ENCODE measurements at regions of chr14 and their contacts with region 1.

Region 1: DNA sequence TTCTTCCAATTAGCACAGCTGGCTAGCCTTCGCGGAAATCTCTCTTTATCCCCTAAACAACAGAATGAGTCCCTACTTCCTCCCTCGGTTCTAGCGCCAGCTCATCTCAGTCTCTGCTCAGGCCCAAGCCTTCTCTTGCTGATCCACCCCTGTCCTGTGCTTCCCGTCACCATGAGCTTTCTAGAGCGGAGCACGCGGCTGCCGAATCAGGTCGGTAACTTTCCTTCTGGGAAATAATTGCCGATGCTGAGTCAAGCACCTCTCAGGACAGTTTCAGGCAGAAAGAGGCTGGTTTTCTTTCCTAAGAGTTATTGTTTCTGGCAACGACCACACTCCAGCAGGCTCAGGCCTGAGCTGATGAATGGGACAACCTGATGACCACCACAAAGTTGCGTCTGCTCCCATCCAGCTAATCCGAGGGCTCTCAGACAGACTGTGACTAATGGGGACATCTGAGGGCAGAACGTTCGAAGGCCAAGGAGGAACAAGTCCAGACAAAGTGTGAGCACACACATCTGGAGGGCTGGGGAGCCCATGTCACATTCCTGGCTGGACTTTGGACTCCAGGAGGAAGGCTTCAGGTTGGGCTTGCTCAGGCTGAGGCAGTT is 13.6 kb upstream of the GPR68 start:
- DNase-seq: no peak
- H3K4me3 Mint-ChIP-seq: no peak overlapping the region
- H3K27ac Mint-ChIP-seq: peak overlapping the region; percentile 64
- H3K4me1 Mint-ChIP-seq: peaks cover 79% of the 10 kb centered on the region
- H3K27me3 Mint-ChIP-seq: no peaks in the 10 kb centered on the region

Region 2: GRCh38 chr14:91154851-91155625 is 103.1 kb before region 1 on chr14:
- CTCF ChIA-PET with region 1: no interaction called
- POLR2A ChIA-PET with region 1: no interaction called
- DNase-seq: no peak
- H3K4me3 Mint-ChIP-seq: no peak overlapping the region
- H3K27ac Mint-ChIP-seq: no peak overlapping the region
- H3K4me1 Mint-ChIP-seq: peaks cover 12% of the 10 kb centered on the region
- H3K27me3 Mint-ChIP-seq: no peaks in the 10 kb centered on the region

Region 3: GRCh38 chr14:91193069-91193468 is 65.0 kb before region 1 on chr14:
- CTCF ChIA-PET with region 1: no interaction called
- POLR2A ChIA-PET with region 1: interaction called, 10 read pairs
- DNase-seq: no peak
- H3K4me3 Mint-ChIP-seq: no peak overlapping the region
- H3K27ac Mint-ChIP-seq: no peak overlapping the region
- H3K4me1 Mint-ChIP-seq: peaks cover 49% of the 10 kb centered on the region
- H3K27me3 Mint-ChIP-seq: no peaks in the 10 kb centered on the region

Region 4: DNA sequence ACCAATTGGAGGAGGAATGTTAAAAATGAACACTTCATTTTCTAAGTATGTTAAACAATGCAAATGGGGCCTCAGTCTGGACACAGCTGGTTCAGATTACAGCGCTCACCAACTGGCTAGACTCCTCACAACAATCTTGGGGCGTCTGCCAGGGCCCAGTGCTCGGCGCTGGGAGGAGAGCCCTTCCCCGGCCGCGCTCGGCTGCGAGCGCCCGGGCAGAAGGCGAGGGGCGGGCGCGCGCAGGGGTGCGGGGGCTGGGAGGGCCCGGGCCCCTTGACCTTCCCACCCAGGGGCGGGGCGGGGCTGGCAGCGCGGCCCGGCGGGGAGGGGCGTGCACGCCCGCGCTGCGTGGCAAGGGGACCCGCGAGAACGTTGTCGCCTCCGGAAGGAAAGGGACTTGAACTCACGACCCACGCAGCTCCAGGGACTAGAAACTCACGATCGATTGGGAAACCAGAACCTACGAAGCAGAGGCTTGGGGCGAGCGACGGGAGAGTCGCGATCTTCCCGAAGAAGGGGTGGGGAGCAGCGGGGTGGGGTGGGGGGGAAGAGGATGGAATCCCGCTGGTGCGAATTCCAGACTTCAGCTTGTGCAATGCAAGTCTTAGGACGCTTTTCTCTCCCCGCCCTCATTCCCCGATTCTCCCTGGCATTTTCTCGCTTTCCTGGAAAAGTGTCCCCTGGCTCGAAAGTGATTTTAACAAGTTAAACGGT is 689.5 kb after region 1 on chr14 and contains the start of gene FBLN5:
- CTCF ChIA-PET with region 1: no interaction called
- POLR2A ChIA-PET with region 1: no interaction called
- DNase-seq: peak; percentile 19
- H3K4me3 Mint-ChIP-seq: peak within 1 kb of the TSS; percentile 62
- H3K27ac Mint-ChIP-seq: no peak within 1 kb of the TSS
- H3K4me1 Mint-ChIP-seq: peaks cover 13% of the 10 kb centered on the region
- H3K27me3 Mint-ChIP-seq: peaks cover 34% of the 10 kb centered on the region
- total RNA-seq, gene FBLN5: 2.0 to 2.5 TPM

Measured in activated CD4-positive, alpha-beta memory T cell treated with anti-CD3 and anti-CD28 coated beads, Interleukin-2, amount 10 ng/mL, durations not matched to agents 7 days and 5 days (primary cell).